K562 (cell line): ENCODE measurements at regions of chr14 and their contacts with region 1.

Region 1: DNA sequence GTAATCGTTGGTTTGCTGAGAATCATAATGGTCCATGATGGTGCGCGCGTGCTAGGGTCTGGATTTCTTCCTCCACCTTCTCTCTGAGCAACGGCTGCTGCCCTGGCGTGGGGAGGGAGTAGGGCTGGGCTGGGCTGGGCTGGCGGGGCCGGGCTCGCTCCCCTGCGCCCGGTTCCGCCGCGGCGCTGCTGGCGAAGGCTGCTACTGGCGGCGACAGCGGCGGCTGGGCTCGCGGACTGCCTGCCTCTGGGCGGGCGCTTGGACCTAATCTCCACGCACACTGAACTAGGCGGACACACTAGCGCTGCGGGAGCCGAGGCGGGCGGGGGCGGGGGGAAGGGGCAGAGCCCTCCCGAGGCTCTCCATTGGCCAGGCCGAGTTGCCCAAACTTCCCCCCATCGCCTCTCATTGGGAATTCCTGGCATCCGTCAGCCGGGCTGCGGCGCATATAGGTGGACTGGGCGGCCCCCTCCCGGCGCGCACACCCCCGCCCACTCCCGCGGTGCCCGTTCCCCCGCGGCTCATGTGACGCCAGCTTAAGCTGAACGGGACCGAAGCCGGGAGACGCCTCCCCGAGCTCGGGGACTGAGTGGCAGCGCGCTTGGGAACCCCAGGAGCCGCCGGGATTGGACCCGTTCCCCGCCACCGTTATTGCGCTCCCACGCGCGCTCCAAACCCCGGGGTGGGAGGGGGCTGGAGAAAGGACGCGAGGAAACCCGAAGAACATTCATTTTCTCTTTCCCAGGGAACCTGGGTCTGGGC is at the start of gene ACTN1:
- DNase-seq: peak; percentile 84 to 95 (median 90)
- ATAC-seq: peak; percentile 88
- H3K4me3 ChIP-seq: peak within 1 kb of the TSS; percentile 85
- H3K27ac ChIP-seq: peak within 1 kb of the TSS; percentile 83
- H3K4me1 ChIP-seq: peaks cover 18 to 25% of the 10 kb centered on the region in 2 experiments; a peak in 4 of 5 replicates
- H3K27me3 ChIP-seq: no peaks in the 10 kb centered on the region
- CTCF ChIP-seq: no peak
- EP300 ChIP-seq: no peak
- POLR2A ChIP-seq: peak; percentile 66
- RAD21 ChIP-seq: no peak
- polyA plus RNA-seq, gene ACTN1: 2.2 to 5.6 TPM

Region 2: DNA sequence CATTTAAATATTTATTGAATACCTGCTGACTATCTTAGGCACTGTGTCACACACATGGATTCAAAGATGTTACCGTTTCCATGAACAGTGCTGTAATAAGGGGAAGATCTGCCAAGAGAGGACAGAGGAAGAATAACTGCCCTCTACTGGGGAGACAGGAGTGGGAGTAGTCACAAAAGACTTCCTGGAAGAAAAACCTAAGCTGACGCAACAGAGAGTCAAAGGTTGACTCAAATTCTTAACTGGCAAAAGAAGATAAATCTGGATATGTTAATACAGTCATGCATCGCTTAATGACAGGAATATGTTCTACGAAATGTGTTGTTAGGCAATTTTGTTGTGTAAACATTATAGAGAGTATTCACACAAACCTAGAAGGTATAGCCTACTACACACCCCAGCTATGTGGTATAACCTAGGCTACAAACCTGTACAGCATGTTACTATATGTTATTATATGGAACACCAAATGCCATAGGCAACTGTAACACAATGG is 122.2 kb after region 1 on chr14:
- CTCF ChIA-PET with region 1: no interaction called
- POLR2A ChIA-PET with region 1: no interaction called
- in situ Hi-C with region 1: no loop called
- intact Hi-C with region 1: loop called (anchors 5 kb)
- DNase-seq: peak; percentile 28 to 73 (median 41)
- ATAC-seq: peak; percentile 99
- H3K4me3 ChIP-seq: no peak overlapping the region
- H3K27ac ChIP-seq: peak overlapping the region; percentile 70; the same call in 2 of the 3 replicates
- H3K4me1 ChIP-seq: peaks cover 0 to 6% of the 10 kb centered on the region in 2 experiments; a peak in 1 of 5 replicates
- H3K27me3 ChIP-seq: no peaks in the 10 kb centered on the region
- CTCF ChIP-seq: peak; percentile 57 to 69 (median 66)
- EP300 ChIP-seq: peak; percentile 88
- POLR2A ChIP-seq: no peak
- RAD21 ChIP-seq: peak; percentile 43 to 58